Endothelial cell of umbilical vein (primary cell): ENCODE measurements at regions of chr17 and their contacts with region 1.

Region 1: DNA sequence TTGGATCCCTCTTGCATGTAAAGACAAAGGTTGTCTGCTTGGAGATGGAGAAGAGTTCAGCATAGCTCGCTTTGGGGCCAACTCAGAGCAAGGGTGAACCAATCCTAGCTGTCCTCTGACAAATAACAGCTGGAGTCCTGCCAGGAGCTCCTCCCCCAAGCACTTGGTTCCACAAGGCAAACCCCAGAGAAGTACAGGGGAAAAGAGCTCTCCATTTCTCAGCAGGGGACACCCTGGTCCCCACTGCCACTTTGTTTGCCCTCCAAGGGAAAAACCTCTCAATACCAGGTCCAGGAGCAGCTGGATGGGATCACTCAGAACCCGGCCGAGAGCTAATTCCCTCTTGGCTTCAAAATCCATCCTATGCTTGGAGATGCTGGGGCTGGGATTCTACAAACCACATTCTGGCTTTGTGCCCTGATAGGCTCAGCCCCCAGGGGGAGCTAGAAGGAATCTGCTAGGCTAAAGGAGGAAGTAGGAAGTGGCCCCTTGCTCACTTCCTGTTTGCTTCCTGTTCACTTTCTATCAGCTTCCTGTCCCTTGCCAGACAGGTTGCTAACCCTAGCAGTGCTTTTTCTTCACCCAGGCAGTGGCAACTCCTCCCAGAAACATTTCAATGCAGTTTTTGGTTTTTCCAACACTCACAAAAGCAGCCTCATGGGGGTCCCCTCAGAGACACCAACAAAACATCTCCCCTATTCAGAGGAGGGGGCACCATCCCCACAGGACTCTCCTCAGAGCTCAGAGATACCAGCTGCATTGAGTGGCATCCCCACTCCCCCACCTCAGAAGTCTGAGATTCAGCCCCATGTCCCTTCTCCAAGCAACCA is 30.7 kb downstream of the CDRT4 start:
- DNase-seq: peak; percentile 32
- H3K4me3 ChIP-seq: no peak overlapping the region
- H3K27ac ChIP-seq: no peak overlapping the region
- H3K4me1 ChIP-seq: peaks cover 23% of the 10 kb centered on the region
- H3K27me3 ChIP-seq: no peaks in the 10 kb centered on the region
- CTCF ChIP-seq: peak; percentile 39 to 47
- POLR2A ChIP-seq: no peak

Region 2: GRCh38 chr17:15262291-15263205 is 174.1 kb before region 1 on chr17:
- CTCF ChIA-PET with region 1: interaction called, 14 read pairs
- POLR2A ChIA-PET with region 1: no interaction called
- dilution Hi-C with region 1: no loop called
- intact Hi-C with region 1: loop called (anchors 2 kb)
- DNase-seq: peak; percentile 63
- H3K4me3 ChIP-seq: peak overlapping the region; percentile 45 to 82 (median 67)
- H3K27ac ChIP-seq: peak overlapping the region; percentile 50
- H3K4me1 ChIP-seq: peaks cover 21% of the 10 kb centered on the region
- H3K27me3 ChIP-seq: peaks cover 0 to 10% of the 10 kb centered on the region in 2 experiments
- CTCF ChIP-seq: peak in 1 of 2 donors; percentile 5
- POLR2A ChIP-seq: peak; percentile 74

Region 3: DNA sequence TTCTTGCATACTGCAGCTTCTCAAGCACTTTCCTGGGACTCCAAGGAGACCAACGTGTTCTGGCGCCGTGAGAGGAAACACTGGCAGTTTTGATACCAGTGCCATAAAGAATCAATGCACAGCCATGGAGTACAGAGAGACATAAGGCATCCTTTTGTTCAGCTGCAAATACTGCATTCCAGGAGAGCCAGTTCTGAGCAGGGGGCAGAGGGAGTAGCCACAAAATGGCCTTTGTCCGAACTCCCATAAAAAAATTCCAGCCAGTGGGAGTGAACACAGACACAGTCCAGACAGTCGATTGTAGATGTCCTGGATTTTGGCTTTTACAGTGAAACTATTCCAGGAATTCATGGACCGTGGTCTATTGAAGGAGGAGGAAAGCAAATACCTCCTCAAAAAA is 59.1 kb before region 1 on chr17:
- CTCF ChIA-PET with region 1: no interaction called
- POLR2A ChIA-PET with region 1: no interaction called
- dilution Hi-C with region 1: no loop called
- intact Hi-C with region 1: no loop called
- DNase-seq: no peak
- H3K4me3 ChIP-seq: no peak overlapping the region
- H3K27ac ChIP-seq: no peak overlapping the region
- H3K4me1 ChIP-seq: no peaks in the 10 kb centered on the region
- H3K27me3 ChIP-seq: peaks cover 8 to 11% of the 10 kb centered on the region in 2 experiments
- CTCF ChIP-seq: no peak
- POLR2A ChIP-seq: no peak

Region 4: GRCh38 chr17:15424521-15424920 is 12.2 kb before region 1 on chr17:
- CTCF ChIA-PET with region 1: interaction called, 16 read pairs
- POLR2A ChIA-PET with region 1: no interaction called
- dilution Hi-C with region 1: no loop called
- intact Hi-C with region 1: no loop called
- DNase-seq: no peak
- H3K4me3 ChIP-seq: no peak overlapping the region
- H3K27ac ChIP-seq: no peak overlapping the region
- H3K4me1 ChIP-seq: no peaks in the 10 kb centered on the region
- H3K27me3 ChIP-seq: no peaks in the 10 kb centered on the region
- CTCF ChIP-seq: no peak
- POLR2A ChIP-seq: no peak

Region 5: DNA sequence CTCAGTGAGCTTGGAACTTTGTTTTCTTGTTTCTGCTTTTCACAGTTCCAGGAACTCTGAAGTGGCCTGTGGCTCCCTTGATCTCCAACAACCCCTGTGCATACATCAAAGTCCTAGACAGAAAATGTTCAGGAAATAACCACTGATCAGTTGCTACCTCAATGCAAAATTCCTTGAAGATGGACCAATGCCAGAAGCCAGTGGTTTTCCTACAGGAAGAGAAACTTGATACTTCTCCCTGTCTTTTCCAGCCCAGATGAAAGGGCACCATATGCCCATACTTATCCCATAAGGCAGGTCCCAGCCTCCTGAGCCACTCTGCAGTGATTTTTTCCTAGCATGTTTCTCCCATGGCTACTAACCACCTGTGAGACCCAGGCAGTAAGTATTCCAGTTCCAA is 43.0 kb after region 1 on chr17:
- CTCF ChIA-PET with region 1: interaction called, 10 read pairs
- POLR2A ChIA-PET with region 1: no interaction called
- dilution Hi-C with region 1: no loop called
- intact Hi-C with region 1: no loop called
- DNase-seq: peak; percentile 75
- H3K4me3 ChIP-seq: no peak overlapping the region
- H3K27ac ChIP-seq: peak overlapping the region; percentile 19
- H3K4me1 ChIP-seq: peaks cover 22% of the 10 kb centered on the region
- H3K27me3 ChIP-seq: no peaks in the 10 kb centered on the region
- CTCF ChIP-seq: no peak
- POLR2A ChIP-seq: no peak